Motor neuron (in vitro differentiated cells): ENCODE measurements at regions of chr22 and their contacts with region 1.

Region 1: DNA sequence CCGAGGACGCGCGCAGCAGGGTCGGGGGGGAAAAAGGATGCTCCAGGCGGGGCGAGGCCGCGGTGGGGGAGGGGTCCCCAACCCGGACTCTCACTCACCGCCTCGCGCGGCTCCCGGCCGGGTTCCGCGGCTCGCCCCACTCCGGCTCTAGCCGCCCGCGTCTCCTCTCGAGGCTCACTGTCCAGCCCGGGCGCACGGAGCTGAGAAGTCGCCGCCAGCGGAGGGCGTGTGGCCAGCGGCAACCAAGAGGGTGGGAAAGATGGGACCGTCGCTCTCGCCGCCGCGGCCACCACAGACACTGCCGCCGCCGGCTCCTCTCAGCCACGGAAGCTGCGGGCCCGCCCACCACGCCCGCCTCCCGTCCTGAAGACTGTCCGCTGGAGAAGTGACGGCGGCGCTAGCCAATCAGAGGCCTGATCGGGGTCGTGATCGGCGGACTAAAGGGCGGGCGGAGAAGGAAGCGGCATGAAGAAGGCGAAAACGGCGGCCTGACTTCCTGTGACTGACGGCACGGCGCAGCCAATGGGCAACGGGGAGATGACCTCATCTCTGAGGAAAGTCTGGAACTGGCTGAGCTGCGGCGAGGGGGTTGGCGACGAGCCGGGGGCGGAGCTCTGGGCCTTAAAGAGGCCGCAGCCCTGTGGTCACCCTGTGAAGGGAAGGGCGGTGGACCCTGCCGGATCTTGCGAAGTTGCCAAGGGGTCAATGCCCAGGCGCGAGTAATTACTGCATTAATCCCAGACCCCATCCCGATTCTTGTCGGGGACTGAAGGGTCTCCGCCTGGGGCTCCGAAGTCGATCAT is at the start of gene MRTFA:
- ATAC-seq: peak; percentile 88 to 94 (median 92)
- H3K4me3 ChIP-seq: peak within 1 kb of the TSS; percentile 66 to 94 (median 71)
- H3K27ac ChIP-seq: peak within 1 kb of the TSS; percentile 84 to 87
- H3K4me1 ChIP-seq: peaks cover 14 to 18% of the 10 kb centered on the region in 2 donors
- total RNA-seq, gene MRTFA: 13.1 to 33.2 (median 21.7) TPM

Region 2: GRCh38 chr22:40238425-40239344 is 397.9 kb before region 1 on chr22:
- in situ Hi-C with region 1: no loop called
- ATAC-seq: peak in 6 of 8 experiments; percentile 13 to 81 (median 25)
- H3K4me3 ChIP-seq: no peak overlapping the region
- H3K27ac ChIP-seq: no peak overlapping the region
- H3K4me1 ChIP-seq: peaks cover 8 to 15% of the 10 kb centered on the region in 2 donors

Region 3: DNA sequence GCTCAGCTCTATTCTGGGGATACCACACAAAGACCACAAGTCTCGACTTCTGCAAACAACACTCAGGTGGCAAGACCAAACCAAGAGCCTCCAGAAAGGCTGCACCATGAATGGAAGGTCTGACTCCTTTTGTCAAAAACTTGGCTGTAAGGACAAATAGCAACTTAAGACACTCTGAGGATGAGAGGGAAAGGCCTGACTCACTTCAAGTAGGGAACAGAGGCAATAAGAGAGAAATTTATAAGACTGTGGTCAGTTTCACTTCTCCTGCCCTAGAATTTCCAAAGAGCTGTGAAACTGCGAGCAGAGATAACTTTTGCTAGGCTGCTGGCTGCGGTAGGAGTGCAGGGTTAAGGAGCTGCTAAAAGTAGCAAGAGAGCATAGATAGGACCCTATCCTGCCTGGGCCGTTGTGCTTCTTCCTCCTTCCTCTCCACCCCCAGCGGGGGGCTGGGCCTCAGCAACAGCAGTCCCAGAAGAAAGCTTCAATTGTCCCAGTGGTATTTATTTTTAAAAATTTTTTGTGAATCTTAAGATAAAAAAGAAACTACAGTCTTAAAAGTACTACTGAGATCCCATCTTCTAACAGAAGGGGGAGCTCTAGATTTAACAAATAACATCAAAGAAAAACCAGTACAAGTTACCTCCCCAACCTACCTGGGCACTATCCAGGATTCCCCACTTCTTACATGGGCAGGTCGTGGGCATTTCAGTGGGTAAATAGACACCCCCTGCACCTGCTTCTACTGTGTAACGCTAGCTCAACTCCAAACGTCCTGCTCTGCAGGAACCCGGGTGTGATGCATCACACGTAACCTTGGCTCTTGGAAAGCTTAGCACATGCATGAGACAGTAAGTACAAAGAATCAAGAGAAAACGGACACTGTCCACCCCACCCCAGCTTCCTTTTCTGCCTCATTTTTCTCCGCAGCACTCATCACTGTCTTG is 199.8 kb before region 1 on chr22:
- in situ Hi-C with region 1: loop called in 4 of 9 experiments (anchors 10 to 25 kb)
- ATAC-seq: peak in 6 of 8 experiments; percentile 25 to 62 (median 50)
- H3K4me3 ChIP-seq: no peak overlapping the region
- H3K27ac ChIP-seq: no peak overlapping the region
- H3K4me1 ChIP-seq: no peaks in the 10 kb centered on the region

Region 4: DNA sequence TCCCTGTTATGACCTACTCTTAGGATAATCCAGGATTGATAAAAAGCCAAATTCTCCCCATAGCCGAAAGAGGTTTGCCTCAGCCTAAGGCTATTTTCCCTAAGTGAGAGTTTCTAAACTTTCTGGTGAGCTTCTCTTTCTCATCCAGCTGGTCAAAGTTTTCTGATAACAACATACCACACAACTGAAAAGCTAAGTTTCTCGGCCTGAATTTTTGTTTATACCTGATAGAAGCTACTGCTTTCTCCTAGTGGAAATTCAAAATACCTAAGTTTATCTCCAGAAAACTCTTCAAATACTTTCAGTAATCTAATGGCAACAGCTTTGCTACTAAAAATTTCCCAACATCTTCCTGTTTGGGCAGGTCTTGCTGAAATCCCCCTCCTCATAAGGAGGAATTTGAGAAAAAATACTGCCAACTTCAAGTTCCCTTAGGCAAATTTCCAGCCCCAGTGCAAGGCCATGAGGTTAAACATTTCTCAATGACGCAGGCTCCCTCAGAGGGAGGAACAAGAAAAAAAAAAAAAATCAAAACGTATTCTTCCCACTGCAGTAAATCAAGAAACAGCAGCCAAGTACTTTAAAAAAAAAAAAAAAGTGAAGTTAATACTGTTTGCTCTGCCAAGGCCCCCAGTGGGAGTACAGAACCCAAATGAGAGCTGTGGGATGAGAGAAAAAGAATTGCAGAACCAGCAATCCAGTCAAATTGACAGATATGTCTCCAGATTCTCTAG is 127.0 kb before region 1 on chr22:
- in situ Hi-C with region 1: loop called in 1 of 9 experiments (anchors 25 kb)
- ATAC-seq: peak in 4 of 8 experiments; percentile 32 to 64 (median 60)
- H3K4me3 ChIP-seq: no peak overlapping the region
- H3K27ac ChIP-seq: no peak overlapping the region
- H3K4me1 ChIP-seq: peaks cover 10 to 13% of the 10 kb centered on the region in 2 donors

Region 5: GRCh38 chr22:40525249-40525884 is 111.2 kb before region 1 on chr22:
- in situ Hi-C with region 1: loop called in 3 of 9 experiments (anchors 10 to 25 kb)
- ATAC-seq: peak in 3 of 8 experiments; percentile 56 to 69 (median 58)
- H3K4me3 ChIP-seq: no peak overlapping the region
- H3K27ac ChIP-seq: no peak overlapping the region
- H3K4me1 ChIP-seq: no peaks in the 10 kb centered on the region

Region 6: GRCh38 chr22:40533712-40534378 is 102.7 kb before region 1 on chr22:
- in situ Hi-C with region 1: loop called in 2 of 9 experiments (anchors 10 to 25 kb)
- ATAC-seq: peak in 7 of 8 experiments; percentile 41 to 69 (median 46)
- H3K4me3 ChIP-seq: no peak overlapping the region
- H3K27ac ChIP-seq: no peak overlapping the region
- H3K4me1 ChIP-seq: peaks cover 9 to 10% of the 10 kb centered on the region in 2 donors

Region 7: DNA sequence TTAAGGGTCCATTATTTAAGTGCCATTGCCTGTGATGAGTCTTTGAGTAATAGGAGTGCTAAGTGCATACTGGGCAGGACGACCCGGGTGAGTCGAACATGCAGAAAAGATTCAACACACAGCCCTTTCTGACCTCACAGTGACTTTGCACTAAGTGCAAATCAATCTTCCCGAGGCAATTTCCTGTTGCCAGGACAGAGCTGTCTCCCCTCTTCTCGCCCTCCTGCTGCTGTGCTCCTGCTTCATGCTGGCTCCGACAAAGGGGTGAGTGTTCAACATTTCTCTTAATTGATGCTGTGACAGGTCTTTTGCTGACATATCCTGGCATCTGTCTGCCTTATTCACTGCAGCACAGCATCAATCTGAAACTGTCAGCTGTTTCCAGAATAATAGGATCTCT is 84.7 kb after region 1 on chr22:
- in situ Hi-C with region 1: no loop called
- ATAC-seq: peak; percentile 90 to 94 (median 92)
- H3K4me3 ChIP-seq: no peak overlapping the region
- H3K27ac ChIP-seq: peak overlapping the region; percentile 76 to 79
- H3K4me1 ChIP-seq: peaks cover 20% of the 10 kb centered on the region in 2 donors